Ovary (tissue), 10 donors: ENCODE measurements at regions of chr17 and their contacts with region 1.

Region 1: GRCh38 chr17:63406689-63407330 is 39.3 kb downstream of the CYB561 start:
- DNase-seq: peak in 4 of 5 donors; percentile 49 to 79 (median 70)
- H3K4me3 ChIP-seq: no peak overlapping the region
- H3K27ac ChIP-seq: no peak overlapping the region
- H3K4me1 ChIP-seq: peaks cover 4% of the 10 kb centered on the region
- H3K27me3 ChIP-seq: no peaks in the 10 kb centered on the region
- CTCF ChIP-seq: peak; percentile 66 to 84 (median 68)
- EP300 ChIP-seq: no peak
- POLR2A ChIP-seq: no peak

Region 2: DNA sequence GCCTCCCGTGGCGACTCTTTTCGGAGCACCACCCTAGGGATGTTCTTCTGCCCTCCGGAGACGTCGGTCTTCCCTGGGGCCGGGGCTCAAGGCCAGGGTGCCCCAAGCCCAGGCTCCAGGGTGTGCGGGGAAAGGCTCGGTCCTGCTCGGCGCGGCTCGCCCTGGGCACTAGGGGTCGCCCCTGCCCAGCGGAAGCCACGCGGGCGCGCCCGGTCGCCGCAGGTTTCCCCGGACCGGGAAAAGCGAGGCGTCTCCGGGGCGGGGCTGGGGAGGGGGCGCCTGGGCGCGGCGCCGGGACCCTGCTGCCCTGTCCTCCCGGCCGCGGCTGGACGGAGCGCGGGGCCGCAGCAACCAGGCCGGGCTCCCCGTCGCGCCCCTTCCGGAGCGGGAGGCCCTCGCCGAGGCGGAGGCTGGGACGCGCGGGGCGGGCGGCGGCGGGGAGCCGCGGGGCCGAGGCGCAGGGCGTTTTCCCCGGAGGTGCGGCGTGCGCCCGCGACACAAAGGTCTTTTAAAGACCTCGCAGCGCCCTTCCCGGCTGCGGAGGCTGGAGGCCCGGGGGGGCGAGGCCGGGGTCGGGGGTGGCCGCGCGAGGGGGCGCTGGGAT is 702.9 kb before region 1 on chr17:
- intact Hi-C with region 1: loop called in 2 of 4 experiments (anchors 5 kb)
- DNase-seq: peak; percentile 67 to 88 (median 79)
- H3K4me3 ChIP-seq: peak overlapping the region; percentile 46
- H3K27ac ChIP-seq: peak overlapping the region; percentile 18 to 39
- H3K4me1 ChIP-seq: peaks cover 12% of the 10 kb centered on the region
- H3K27me3 ChIP-seq: no peaks in the 10 kb centered on the region
- CTCF ChIP-seq: peak; percentile 68 to 88 (median 88)
- EP300 ChIP-seq: no peak
- POLR2A ChIP-seq: no peak

Region 3: GRCh38 chr17:63445979-63446691 is 39.3 kb after region 1 on chr17 and contains the start of gene CYB561:
- intact Hi-C with region 1: no loop called
- DNase-seq: peak; percentile 81 to 90 (median 86)
- H3K4me3 ChIP-seq: peak within 1 kb of the TSS; percentile 65
- H3K27ac ChIP-seq: peak within 1 kb of the TSS; percentile 48 to 77
- H3K4me1 ChIP-seq: peaks cover 7% of the 10 kb centered on the region
- H3K27me3 ChIP-seq: no peaks in the 10 kb centered on the region
- CTCF ChIP-seq: peak; percentile 24 to 60 (median 43)
- EP300 ChIP-seq: no peak
- POLR2A ChIP-seq: peak; percentile 56
- total RNA-seq, gene CYB561: 9.3 to 43.8 (median 18.8) TPM